Activated CD4-positive, alpha-beta T cell treated with anti-CD3 and anti-CD28 coated beads, Interleukin-2, amount 10 ng/mL, durations not matched to agents 24 days and 14 days (primary cell): ENCODE measurements at regions of chr1 and their contacts with region 1.

Region 1: DNA sequence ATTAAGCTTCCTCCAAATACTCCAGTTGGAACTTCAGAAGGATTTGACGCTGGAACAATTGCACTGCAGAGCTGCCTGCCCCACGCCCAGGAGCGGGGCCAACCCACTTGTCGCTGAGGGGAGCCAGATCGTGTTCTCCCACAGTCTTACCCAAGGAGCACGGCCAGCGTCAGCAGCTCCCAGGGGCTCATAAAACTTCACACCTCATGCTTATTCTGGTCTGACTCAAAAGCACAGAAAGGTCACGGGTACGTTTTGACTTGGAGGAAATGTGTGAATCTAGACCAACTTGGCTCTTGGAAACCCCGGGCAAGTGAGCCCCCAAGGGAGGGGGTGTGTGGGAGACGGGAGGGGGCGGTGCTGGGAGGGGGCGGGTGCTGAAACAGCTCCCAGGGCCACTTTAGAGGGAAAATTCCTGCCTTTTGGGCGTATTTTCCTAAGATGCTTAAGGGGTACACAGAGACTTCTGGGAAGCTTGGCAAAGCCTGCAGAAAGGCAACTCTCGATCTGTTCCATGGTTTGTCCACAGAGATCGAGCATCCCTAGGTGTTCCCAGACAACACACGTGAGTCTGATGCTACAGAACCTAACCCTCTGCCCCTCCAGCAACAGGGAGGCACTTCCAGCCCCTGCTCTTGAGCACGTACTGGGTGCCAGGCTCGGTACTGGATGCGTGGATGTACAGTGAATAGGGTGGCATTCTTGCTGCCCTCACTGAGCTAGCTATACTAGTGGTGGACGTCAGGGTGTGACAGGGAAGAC is 98.9 kb downstream of the DHRS3 start:
- DNase-seq: no peak
- H3K4me3 Mint-ChIP-seq: peak overlapping the region; percentile 35
- H3K27ac Mint-ChIP-seq: peak overlapping the region; percentile 81
- H3K4me1 Mint-ChIP-seq: peaks cover 29% of the 10 kb centered on the region
- H3K27me3 Mint-ChIP-seq: no peaks in the 10 kb centered on the region

Region 2: GRCh38 chr1:12413664-12414410 is 105.3 kb before region 1 on chr1:
- intact Hi-C with region 1: loop called (anchors 1 kb)
- DNase-seq: no peak
- H3K4me3 Mint-ChIP-seq: no peak overlapping the region
- H3K27ac Mint-ChIP-seq: no peak overlapping the region
- H3K4me1 Mint-ChIP-seq: peaks cover 13% of the 10 kb centered on the region
- H3K27me3 Mint-ChIP-seq: no peaks in the 10 kb centered on the region